A673 (cell line): ENCODE measurements at regions of chr7 and their contacts with region 1.

Region 1: GRCh38 chr7:148819697-148820360 is 64.3 kb downstream of the EZH2 start:
- DNase-seq: peak; percentile 33
- H3K4me3 ChIP-seq: no peak overlapping the region
- H3K27ac ChIP-seq: peak overlapping the region; percentile 24
- H3K4me1 ChIP-seq: peaks cover 14% of the 10 kb centered on the region
- H3K27me3 ChIP-seq: no peaks in the 10 kb centered on the region
- CTCF ChIP-seq: no peak

Region 2: DNA sequence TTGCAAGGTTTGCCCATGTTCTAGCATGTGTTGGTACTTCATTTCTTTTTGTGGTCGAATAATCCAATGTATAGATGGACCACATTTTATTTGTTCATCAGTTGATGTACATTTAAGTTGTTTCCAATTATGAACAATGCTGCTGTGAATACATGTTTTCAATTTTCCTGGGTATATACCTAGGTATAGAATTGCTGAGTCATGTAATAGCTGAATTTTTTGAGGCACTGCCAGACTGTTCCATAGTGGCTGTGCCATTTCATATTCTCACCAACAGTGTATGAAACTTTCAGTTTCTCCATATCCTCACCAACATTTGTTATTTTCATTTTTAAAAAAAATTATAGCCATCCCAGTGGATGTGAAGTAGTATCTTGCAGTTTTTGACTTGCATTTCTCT is 26.2 kb before region 1 on chr7:
- CTCF ChIA-PET with region 1: no interaction called
- POLR2A ChIA-PET with region 1: interaction called, 17 read pairs
- intact Hi-C with region 1: no loop called
- DNase-seq: no peak
- H3K4me3 ChIP-seq: no peak overlapping the region
- H3K27ac ChIP-seq: peak overlapping the region; percentile 14
- H3K4me1 ChIP-seq: no peaks in the 10 kb centered on the region
- H3K27me3 ChIP-seq: no peaks in the 10 kb centered on the region
- CTCF ChIP-seq: no peak